Activated CD4-positive, alpha-beta memory T cell treated with anti-CD3 and anti-CD28 coated beads for 36 hours (primary cell): ENCODE measurements at regions of chr14 and their contacts with region 1.

Region 1: DNA sequence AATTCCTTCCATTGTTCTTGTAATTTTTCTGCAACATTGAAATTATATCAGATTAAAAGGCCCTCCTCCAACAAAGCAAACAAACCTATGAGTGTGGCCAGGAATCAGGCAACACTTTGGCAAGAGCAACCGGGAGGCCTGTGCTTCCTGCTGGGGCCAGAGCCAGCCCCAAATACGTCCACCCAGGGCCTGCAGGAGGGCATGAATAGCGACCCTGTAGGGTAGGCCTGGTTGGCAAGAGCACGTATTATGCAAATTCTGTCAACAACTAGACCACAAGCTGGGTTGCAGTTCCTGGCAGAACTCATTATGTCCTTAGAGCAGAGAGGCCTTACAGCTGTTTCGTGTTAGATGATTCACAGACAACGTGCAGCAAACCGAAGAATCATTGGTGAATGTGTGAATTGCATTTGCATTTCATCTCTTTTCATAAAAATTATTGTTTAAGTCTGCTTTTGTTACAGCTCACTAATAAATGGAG is 26.9 kb upstream of the LGALS3 start:
- DNase-seq: peak; percentile 71
- H3K4me3 Mint-ChIP-seq: peak overlapping the region; percentile 17
- H3K27ac Mint-ChIP-seq: peak overlapping the region; percentile 95
- H3K4me1 Mint-ChIP-seq: peaks cover 49% of the 10 kb centered on the region
- H3K27me3 Mint-ChIP-seq: no peaks in the 10 kb centered on the region

Region 2: DNA sequence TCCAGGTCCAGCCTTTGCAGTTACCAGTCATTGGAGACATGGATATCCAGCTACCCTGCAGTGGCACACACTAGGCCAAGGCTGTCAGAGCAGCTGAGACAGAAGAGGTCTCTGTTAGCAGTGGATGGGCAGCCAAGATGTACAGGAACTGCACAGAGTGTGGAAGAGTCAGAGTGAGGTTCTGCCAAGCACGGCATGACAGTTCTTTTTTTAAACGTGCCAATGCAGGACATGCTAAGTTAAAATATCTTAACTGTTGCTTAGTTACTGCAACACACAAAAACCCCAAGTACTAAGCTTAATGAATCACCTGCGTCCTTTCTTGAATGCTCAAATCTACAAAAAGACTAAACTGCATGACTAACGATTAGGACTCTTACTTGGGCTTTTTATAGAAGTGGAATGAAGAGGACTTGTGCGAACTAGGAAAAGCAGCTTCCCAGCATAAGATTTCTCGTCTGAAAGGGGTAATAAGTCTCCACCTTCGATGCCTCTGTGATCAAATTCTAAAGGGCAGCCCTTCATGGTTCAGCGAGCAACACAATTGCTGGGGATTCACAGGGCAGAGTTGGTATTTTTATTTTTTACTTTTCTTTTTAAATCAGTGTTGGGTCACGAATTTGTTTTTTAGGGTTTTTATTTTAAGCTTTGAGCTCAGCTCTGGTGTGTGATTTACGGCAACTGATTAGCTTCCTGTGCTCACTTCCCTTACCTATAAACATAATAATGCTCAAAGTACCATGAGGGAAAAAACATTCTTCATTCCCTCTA is 30.1 kb before region 1 on chr14:
- CTCF ChIA-PET with region 1: interaction called, 5 read pairs
- POLR2A ChIA-PET with region 1: no interaction called
- intact Hi-C with region 1: loop called (anchors 1 kb)
- DNase-seq: peak; percentile 60
- H3K4me3 Mint-ChIP-seq: peak overlapping the region; percentile 20
- H3K27ac Mint-ChIP-seq: peak overlapping the region; percentile 76
- H3K4me1 Mint-ChIP-seq: peaks cover 40% of the 10 kb centered on the region
- H3K27me3 Mint-ChIP-seq: no peaks in the 10 kb centered on the region

Region 3: GRCh38 chr14:55120571-55121495 is 18.7 kb after region 1 on chr14:
- CTCF ChIA-PET with region 1: no interaction called
- POLR2A ChIA-PET with region 1: no interaction called
- intact Hi-C with region 1: no loop called
- DNase-seq: no peak
- H3K4me3 Mint-ChIP-seq: no peak overlapping the region
- H3K27ac Mint-ChIP-seq: no peak overlapping the region
- H3K4me1 Mint-ChIP-seq: peaks cover 8% of the 10 kb centered on the region
- H3K27me3 Mint-ChIP-seq: no peaks in the 10 kb centered on the region

Region 4: GRCh38 chr14:55160989-55161388 is 58.8 kb after region 1 on chr14:
- CTCF ChIA-PET with region 1: interaction called, 14 read pairs
- POLR2A ChIA-PET with region 1: interaction called, 4 read pairs
- intact Hi-C with region 1: no loop called
- DNase-seq: no peak
- H3K4me3 Mint-ChIP-seq: no peak overlapping the region
- H3K27ac Mint-ChIP-seq: no peak overlapping the region
- H3K4me1 Mint-ChIP-seq: peaks cover 11% of the 10 kb centered on the region
- H3K27me3 Mint-ChIP-seq: no peaks in the 10 kb centered on the region

Region 5: DNA sequence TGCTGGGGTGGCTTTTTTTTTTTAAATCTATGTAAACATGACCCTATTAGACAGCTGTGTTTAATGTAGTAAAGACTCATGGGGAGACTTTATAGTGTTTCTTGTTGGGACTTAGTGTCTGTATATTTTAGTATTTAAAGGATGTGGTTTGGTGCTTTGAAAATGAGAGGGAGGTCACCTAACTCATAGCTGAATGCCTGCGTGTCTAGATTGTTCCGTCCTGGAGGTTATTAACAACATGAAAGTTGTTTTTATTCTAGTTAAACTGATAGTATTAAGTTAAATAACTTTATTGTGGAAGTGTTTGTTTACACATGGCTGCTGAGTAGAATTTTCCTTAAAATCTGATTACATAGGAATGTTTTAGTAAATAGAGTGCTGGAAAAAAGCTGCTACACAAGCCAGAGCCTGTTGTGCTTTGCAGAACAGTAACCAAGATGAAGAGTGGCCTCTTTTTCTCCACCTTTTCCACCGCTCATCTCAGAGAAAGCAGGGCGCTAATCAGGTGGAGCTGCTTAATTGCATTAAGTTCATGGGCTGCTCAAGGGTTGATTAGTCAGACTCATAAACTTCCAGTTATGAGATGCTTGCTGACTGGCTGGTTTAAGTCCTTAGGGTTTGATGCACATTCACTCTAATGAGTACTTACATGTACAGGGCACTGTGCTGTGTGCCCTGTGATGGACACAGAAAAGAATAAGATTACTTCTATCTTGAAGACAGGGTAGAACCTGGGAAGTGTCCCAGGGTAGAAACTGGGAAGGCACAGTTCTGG is 231.7 kb after region 1 on chr14:
- CTCF ChIA-PET with region 1: no interaction called
- POLR2A ChIA-PET with region 1: interaction called, 3 read pairs
- intact Hi-C with region 1: loop called (anchors 2 kb)
- DNase-seq: peak; percentile 20
- H3K4me3 Mint-ChIP-seq: peak overlapping the region; percentile 9
- H3K27ac Mint-ChIP-seq: peak overlapping the region; percentile 57
- H3K4me1 Mint-ChIP-seq: peaks cover 85% of the 10 kb centered on the region
- H3K27me3 Mint-ChIP-seq: no peaks in the 10 kb centered on the region